Left lung (tissue), 14 donors: ENCODE measurements at regions of chr20 and their contacts with region 1.

Region 1: DNA sequence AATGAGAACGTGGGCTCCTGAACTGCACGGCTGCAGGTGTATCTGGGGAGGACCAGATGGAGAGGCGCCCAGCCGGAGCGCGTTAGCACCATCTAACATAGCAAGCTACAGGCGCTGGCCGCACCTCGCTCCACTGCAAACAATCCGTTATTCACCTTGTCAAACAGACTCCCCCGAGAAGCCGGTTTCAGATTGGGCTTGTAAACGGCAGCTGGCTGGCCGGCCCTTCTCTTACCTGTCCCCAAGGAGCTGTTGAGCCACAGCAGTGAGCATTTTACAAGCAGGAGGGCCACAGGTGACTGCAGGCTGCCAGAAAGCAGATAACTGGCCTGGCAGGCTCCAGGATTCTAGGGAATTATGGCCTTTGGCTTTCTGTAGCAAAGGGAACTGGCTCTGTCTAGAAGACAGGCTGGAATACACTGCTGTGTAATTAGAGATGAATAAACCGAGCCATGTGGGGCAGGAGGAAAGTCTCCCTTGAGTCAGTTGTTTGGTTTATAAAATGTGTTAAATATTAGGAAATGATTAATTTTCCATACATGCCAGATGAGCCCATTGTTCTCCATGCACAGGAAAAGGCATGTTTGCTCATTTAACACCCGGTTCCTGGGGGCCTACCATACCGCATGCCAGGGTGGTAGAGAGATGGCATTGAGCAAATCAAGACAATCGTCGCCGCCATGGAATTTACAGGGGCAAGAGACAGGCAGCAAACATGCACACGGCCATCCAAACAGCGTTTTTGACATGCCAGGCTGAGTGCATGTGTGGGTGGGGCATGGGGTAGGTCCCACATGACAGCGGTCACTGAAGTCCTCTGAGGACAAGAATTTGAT is 159.3 kb downstream of the NFATC2 start:
- DNase-seq: peak in 2 of 4 donors; percentile 19 to 33
- ATAC-seq: no peak
- H3K4me3 ChIP-seq: no peak overlapping the region
- H3K27ac ChIP-seq: no peak overlapping the region
- H3K4me1 ChIP-seq: peaks cover 0 to 3% of the 10 kb centered on the region in 2 donors
- H3K27me3 ChIP-seq: no peaks in the 10 kb centered on the region
- CTCF ChIP-seq: no peak

Region 2: GRCh38 chr20:51595058-51595532 is 211.9 kb after region 1 on chr20:
- intact Hi-C with region 1: loop called in 1 of 2 experiments (anchors 5 kb)
- DNase-seq: peak; percentile 75 to 92 (median 90)
- ATAC-seq: peak; percentile 99
- H3K4me3 ChIP-seq: no peak overlapping the region
- H3K27ac ChIP-seq: no peak overlapping the region
- H3K4me1 ChIP-seq: peaks cover 0 to 12% of the 10 kb centered on the region in 2 donors
- H3K27me3 ChIP-seq: no peaks in the 10 kb centered on the region
- CTCF ChIP-seq: peak; percentile 71 to 87